Activated naive CD4-positive, alpha-beta T cell treated with anti-CD3 and anti-CD28 coated beads for 36 hours (primary cell): ENCODE measurements at regions of chr1 and their contacts with region 1.

Region 1: GRCh38 chr1:6794164-6794563 is 8.9 kb downstream of the CAMTA1 start:
- DNase-seq: no peak
- H3K4me3 Mint-ChIP-seq: no peak overlapping the region
- H3K27ac Mint-ChIP-seq: no peak overlapping the region
- H3K4me1 Mint-ChIP-seq: peaks cover 37% of the 10 kb centered on the region
- H3K27me3 Mint-ChIP-seq: no peaks in the 10 kb centered on the region

Region 2: GRCh38 chr1:6811583-6811982 is 17.4 kb after region 1 on chr1:
- CTCF ChIA-PET with region 1: no interaction called
- intact Hi-C with region 1: no loop called
- DNase-seq: no peak
- H3K4me3 Mint-ChIP-seq: no peak overlapping the region
- H3K27ac Mint-ChIP-seq: no peak overlapping the region
- H3K4me1 Mint-ChIP-seq: peaks cover 24% of the 10 kb centered on the region
- H3K27me3 Mint-ChIP-seq: no peaks in the 10 kb centered on the region

Region 3: DNA sequence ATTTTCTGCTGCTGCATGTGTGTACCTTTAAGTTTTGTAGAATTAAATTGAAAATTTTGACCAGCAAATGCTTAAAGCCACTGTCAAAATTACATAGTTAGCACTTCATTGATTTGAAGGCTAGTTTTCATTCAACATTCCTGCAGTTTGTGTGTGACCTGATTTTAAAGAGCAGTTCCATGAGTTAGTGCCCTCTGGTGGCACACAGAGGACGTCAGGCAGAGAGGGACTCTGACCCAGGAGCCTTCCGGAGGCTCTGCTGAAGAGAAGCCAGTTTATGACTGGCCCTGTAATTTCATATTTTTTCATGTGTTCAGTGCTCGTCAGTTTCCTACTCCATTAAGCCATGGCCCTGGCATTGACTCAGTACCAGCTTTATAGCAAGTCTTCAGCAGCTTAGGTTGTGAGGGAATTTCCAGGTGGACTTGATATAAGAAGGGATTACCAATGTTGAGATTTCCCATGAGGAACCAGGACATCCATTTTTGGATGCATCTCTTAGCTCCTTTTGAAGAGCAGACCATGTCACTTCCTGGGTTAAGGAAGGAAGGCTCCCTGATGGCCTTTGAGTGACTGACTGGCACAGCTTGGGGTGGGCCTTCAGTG is 95.8 kb after region 1 on chr1:
- CTCF ChIA-PET with region 1: interaction called, 3 read pairs
- intact Hi-C with region 1: loop called (anchors 1 kb)
- DNase-seq: peak; percentile 58
- H3K4me3 Mint-ChIP-seq: no peak overlapping the region
- H3K27ac Mint-ChIP-seq: no peak overlapping the region
- H3K4me1 Mint-ChIP-seq: peaks cover 3% of the 10 kb centered on the region
- H3K27me3 Mint-ChIP-seq: no peaks in the 10 kb centered on the region

Region 4: GRCh38 chr1:7070389-7071029 is 276.3 kb after region 1 on chr1:
- CTCF ChIA-PET with region 1: no interaction called
- intact Hi-C with region 1: loop called (anchors 1 kb)
- DNase-seq: peak; percentile 72
- H3K4me3 Mint-ChIP-seq: no peak overlapping the region
- H3K27ac Mint-ChIP-seq: no peak overlapping the region
- H3K4me1 Mint-ChIP-seq: peaks cover 2% of the 10 kb centered on the region
- H3K27me3 Mint-ChIP-seq: peaks cover 28% of the 10 kb centered on the region

Region 5: DNA sequence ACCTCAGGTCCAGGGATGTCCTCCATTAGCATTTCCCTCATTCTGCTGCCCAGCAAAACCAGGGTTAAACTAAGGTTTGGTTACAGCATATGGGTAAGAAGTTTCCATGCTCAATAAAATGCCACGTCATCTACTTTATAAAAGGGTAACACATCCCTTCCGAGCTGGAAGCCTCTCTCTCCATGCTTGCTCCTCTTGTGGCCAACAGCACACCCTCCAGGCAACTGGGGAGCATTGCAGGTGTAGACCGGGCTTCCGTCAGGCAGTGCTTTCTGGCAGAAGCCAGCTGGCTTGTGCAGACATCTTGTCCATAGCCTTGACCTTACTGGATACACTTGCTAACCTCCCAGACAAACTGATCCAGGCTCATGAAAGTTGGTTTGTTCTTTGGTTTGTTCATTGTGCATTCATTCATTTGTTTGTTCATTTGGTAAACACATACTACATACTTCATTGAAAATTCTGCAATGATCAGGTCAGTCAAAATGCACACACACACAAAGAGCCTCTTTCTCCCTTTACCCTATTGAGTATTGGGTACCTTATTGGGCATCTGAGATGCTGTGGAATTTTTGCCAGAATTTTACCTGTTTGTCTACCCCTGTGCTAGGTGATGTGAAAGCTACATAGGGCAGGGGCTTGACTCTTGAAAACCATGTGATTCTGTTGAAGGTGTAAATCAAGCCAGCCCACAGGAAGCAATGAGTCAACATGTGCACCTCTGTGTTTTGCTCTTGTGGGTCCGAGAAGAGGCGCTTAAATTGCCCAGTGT is 413.9 kb after region 1 on chr1:
- CTCF ChIA-PET with region 1: no interaction called
- intact Hi-C with region 1: loop called (anchors 10 kb)
- DNase-seq: peak; percentile 55
- H3K4me3 Mint-ChIP-seq: no peak overlapping the region
- H3K27ac Mint-ChIP-seq: no peak overlapping the region
- H3K4me1 Mint-ChIP-seq: no peaks in the 10 kb centered on the region
- H3K27me3 Mint-ChIP-seq: peaks cover 51% of the 10 kb centered on the region